ENCODE measurements at regions of chr11 and their contacts with region 1.

Region 1: DNA sequence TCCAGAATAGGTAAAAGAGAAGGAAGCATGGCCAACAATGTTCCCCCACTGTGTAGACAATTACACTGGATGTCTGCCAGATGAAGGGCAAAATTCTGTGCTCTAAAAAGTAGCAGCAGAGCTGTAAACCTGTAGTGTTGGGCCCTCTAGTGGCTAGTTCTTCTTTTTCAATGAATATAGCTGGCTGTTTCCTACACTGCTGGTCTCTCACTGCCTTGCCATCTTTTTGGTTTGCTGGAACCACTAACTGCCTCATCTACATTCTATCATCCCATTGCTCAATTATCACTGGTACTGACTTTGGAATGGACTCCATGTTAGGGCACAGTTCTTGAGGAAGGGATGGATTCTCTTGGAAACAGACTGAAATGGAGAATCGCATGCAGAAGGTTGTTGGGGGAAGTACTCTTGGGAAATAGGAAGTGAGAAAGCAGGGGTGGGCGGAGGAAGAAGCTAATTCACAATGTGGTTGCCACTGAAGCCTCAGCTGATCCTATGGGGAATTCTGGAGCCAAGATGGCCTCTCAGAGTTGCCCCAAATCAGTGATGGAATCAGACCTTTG is 17.9 kb downstream of the KCNE3 start:
- DNase-seq: peak; percentile 86
- H3K4me3 ChIP-seq: peak overlapping the region in 1 of 3 experiments; percentile 40
- H3K27ac ChIP-seq: no peak overlapping the region
- H3K4me1 ChIP-seq: peaks cover 11% of the 10 kb centered on the region
- H3K27me3 ChIP-seq: no peaks in the 10 kb centered on the region
- CTCF ChIP-seq: peak; percentile 65 to 71
- POLR2A ChIP-seq: no peak

Region 2: GRCh38 chr11:74255741-74256369 is 193.6 kb before region 1 on chr11:
- CTCF ChIA-PET with region 1: interaction called, 440 read pairs
- POLR2A ChIA-PET with region 1: no interaction called
- dilution Hi-C with region 1: no loop called
- intact Hi-C with region 1: loop called (anchors 1 kb)
- DNase-seq: peak; percentile 81
- H3K4me3 ChIP-seq: no peak overlapping the region
- H3K27ac ChIP-seq: no peak overlapping the region
- H3K4me1 ChIP-seq: no peaks in the 10 kb centered on the region
- H3K27me3 ChIP-seq: no peaks in the 10 kb centered on the region
- CTCF ChIP-seq: peak; percentile 83 to 94
- POLR2A ChIP-seq: no peak

Region 3: GRCh38 chr11:74388678-74389327 is 60.6 kb before region 1 on chr11:
- CTCF ChIA-PET with region 1: interaction called, 134 read pairs
- POLR2A ChIA-PET with region 1: no interaction called
- dilution Hi-C with region 1: no loop called
- intact Hi-C with region 1: loop called (anchors 1 kb)
- DNase-seq: peak; percentile 70
- H3K4me3 ChIP-seq: no peak overlapping the region
- H3K27ac ChIP-seq: peak overlapping the region; percentile 17
- H3K4me1 ChIP-seq: peaks cover 5% of the 10 kb centered on the region
- H3K27me3 ChIP-seq: no peaks in the 10 kb centered on the region
- CTCF ChIP-seq: peak; percentile 37 to 57
- POLR2A ChIP-seq: no peak

Region 4: GRCh38 chr11:74437441-74438042 is 11.9 kb before region 1 on chr11:
- CTCF ChIA-PET with region 1: interaction called, 30 read pairs
- POLR2A ChIA-PET with region 1: no interaction called
- dilution Hi-C with region 1: no loop called
- intact Hi-C with region 1: no loop called
- DNase-seq: peak; percentile 82
- H3K4me3 ChIP-seq: no peak overlapping the region
- H3K27ac ChIP-seq: peak overlapping the region; percentile 52
- H3K4me1 ChIP-seq: peaks cover 14% of the 10 kb centered on the region
- H3K27me3 ChIP-seq: no peaks in the 10 kb centered on the region
- CTCF ChIP-seq: no peak
- POLR2A ChIP-seq: no peak

Region 5: DNA sequence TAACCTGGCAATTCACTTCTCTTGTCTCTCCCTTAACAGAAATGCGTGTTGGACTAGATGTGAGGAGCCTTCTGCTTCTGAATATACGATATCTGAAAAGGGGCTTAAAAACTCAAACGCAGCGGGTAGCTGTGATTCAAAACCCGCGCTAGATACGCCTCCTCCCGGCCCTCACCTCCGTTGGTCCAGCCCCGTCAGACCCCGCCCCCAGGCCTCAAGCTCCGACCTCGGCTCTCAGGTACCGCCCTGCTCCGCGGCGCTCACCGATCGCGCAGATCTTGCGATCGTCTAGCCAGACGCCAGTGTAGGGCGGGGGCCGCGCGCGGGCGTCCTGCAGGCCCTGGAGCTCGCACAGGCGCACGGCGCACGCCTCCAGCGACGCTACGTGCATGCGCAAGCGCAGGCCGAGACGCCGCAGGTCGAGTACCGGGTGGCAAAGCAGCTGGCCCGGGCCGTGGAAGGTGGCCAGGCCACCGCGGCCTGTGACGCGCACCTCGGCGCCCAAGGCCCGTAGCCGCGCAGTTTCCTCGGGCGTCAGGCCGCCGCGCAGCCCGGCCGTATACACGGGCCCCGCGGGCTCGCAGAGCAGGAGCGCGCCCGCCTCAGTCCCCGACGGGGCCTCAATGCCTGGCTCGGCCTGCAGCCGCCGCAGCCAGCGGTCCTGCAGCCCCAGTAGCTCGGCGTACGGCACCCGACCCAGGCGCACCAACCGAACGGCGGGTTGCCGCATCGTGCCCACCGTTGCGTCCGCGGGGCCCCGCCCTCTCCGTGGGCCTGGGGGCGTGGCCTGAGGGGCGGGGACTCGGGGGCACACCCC is 43.7 kb after region 1 on chr11 and contains the start of gene LIPT2:
- CTCF ChIA-PET with region 1: interaction called, 22 read pairs
- POLR2A ChIA-PET with region 1: interaction called, 6 read pairs
- dilution Hi-C with region 1: no loop called
- intact Hi-C with region 1: no loop called
- DNase-seq: peak; percentile 98
- H3K4me3 ChIP-seq: peak within 1 kb of the TSS; percentile 4 to 69 (median 52)
- H3K27ac ChIP-seq: peak within 1 kb of the TSS; percentile 14
- H3K4me1 ChIP-seq: peaks cover 4% of the 10 kb centered on the region
- H3K27me3 ChIP-seq: peaks cover 3 to 7% of the 10 kb centered on the region in 2 experiments
- CTCF ChIP-seq: no peak
- POLR2A ChIP-seq: peak; percentile 85
- total RNA-seq, gene LIPT2: 1.7 and 3.2 TPM in 2 replicates

Region 6: DNA sequence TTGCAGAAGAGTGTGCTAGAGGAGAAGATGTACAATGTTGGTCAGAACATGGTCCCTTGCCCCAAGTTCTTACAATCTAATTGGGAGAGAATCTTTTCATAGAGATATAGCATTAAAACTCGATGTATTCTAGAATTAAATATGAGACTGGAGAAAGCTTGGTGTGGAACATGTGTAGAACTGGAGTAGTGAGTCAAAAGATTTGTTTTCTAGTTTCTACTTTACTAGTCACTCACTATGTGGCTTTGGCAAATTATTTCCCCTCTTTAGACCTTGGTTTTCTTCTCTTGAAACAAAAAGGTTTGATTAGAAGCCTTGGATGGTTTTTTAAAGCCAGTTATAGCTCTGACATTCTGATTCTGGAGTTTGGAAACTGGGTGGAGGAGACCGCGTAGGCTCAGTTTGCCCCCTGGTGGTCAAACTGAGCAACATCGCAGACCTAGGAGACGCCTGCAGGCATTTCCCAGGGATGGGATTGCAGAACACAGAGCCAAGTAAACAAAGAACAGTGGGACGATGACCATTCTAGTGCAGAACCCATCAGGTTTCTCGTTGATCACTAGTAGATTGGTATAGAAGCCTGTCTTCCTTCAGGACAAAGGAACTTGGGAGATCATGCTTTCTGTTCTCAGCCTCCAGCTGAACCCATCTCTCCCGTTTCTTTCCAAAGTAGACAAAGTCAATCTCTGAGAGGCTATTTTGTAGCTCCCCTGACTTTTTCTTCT is 290.3 kb after region 1 on chr11:
- CTCF ChIA-PET with region 1: interaction called, 23 read pairs
- POLR2A ChIA-PET with region 1: no interaction called
- dilution Hi-C with region 1: no loop called
- intact Hi-C with region 1: loop called (anchors 10 kb)
- DNase-seq: peak; percentile 64
- H3K4me3 ChIP-seq: no peak overlapping the region
- H3K27ac ChIP-seq: no peak overlapping the region
- H3K4me1 ChIP-seq: no peaks in the 10 kb centered on the region
- H3K27me3 ChIP-seq: peaks cover 11 to 17% of the 10 kb centered on the region in 2 experiments
- CTCF ChIP-seq: peak; percentile 87 to 89
- POLR2A ChIP-seq: no peak

Measured in endothelial cell of umbilical vein (primary cell).